Activated CD4-positive, alpha-beta T cell treated with anti-CD3 and anti-CD28 coated beads, Interleukin-2, amount 10 ng/mL, durations not matched to agents 24 days and 14 days (primary cell): ENCODE measurements at regions of chr12 and their contacts with region 1.

Region 1: GRCh38 chr12:104695453-104696148 is 238.9 kb downstream of the CHST11 start:
- DNase-seq: peak; percentile 90
- H3K4me3 Mint-ChIP-seq: peak overlapping the region; percentile 68
- H3K27ac Mint-ChIP-seq: peak overlapping the region; percentile 96
- H3K4me1 Mint-ChIP-seq: peaks cover 66% of the 10 kb centered on the region
- H3K27me3 Mint-ChIP-seq: peaks cover 2% of the 10 kb centered on the region

Region 2: DNA sequence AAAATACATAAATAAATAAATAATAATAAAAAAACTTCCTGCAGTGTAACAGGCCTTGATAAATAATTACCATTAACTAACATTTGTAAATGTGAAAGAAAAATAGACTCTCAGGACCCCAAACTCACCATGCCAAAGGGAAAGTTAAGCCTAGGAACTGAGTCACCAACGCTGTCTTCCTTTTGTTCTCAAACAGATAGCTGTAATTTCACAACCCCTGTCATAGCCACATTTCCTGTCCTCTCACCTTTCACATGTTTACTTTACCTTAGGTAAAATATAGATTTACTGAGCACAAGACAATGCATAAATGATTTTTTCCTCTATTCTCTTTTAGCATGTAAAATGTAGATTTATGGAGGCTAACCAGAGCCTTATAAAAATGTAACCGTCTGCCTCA is 274.7 kb before region 1 on chr12:
- intact Hi-C with region 1: loop called (anchors 1 kb)
- DNase-seq: peak; percentile 65
- H3K4me3 Mint-ChIP-seq: no peak overlapping the region
- H3K27ac Mint-ChIP-seq: peak overlapping the region; percentile 10
- H3K4me1 Mint-ChIP-seq: peaks cover 6% of the 10 kb centered on the region
- H3K27me3 Mint-ChIP-seq: no peaks in the 10 kb centered on the region

Region 3: DNA sequence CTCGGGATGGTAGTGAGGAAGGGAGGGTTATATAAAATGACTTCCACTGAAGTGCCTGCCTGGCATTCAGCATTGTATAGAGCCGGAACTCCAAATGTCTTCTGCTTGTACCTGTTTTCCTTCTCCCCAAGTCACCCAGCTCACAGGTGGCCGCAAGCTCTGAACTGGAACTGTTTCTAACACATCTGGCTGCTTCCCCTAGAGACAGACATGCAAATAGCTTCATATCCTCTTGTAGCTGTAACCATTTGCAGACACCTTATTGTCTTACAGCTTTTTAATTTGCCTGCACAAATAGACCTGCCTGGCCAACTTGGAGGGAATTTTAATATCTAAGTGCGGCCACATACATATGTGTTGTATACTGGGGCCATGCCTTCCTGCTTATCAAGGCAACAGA is 112.9 kb before region 1 on chr12:
- intact Hi-C with region 1: loop called (anchors 5 kb)
- DNase-seq: no peak
- H3K4me3 Mint-ChIP-seq: no peak overlapping the region
- H3K27ac Mint-ChIP-seq: no peak overlapping the region
- H3K4me1 Mint-ChIP-seq: peaks cover 58% of the 10 kb centered on the region
- H3K27me3 Mint-ChIP-seq: no peaks in the 10 kb centered on the region

Region 4: DNA sequence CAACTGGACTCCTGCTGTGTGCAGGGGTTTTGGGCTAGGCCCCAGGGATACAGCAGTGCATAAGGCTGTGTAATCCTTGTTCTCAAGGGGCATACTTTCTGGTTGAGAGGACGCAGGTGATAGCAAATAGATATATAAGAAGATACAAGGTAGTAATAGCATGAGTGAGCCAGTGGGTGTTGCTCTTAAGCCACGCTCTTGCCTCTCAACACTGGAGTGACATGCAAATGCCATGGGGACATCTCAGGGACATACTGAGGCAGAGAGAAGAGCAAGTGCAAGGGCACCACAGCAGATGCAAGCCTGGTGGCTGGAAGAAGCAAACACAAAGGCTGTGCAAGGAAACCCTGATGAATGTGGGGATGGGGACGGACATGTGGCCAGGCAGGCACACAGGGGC is 15.5 kb before region 1 on chr12:
- intact Hi-C with region 1: loop called (anchors 1 kb)
- DNase-seq: peak; percentile 82
- H3K4me3 Mint-ChIP-seq: peak overlapping the region; percentile 10
- H3K27ac Mint-ChIP-seq: peak overlapping the region; percentile 72
- H3K4me1 Mint-ChIP-seq: peaks cover 68% of the 10 kb centered on the region
- H3K27me3 Mint-ChIP-seq: no peaks in the 10 kb centered on the region

Region 5: DNA sequence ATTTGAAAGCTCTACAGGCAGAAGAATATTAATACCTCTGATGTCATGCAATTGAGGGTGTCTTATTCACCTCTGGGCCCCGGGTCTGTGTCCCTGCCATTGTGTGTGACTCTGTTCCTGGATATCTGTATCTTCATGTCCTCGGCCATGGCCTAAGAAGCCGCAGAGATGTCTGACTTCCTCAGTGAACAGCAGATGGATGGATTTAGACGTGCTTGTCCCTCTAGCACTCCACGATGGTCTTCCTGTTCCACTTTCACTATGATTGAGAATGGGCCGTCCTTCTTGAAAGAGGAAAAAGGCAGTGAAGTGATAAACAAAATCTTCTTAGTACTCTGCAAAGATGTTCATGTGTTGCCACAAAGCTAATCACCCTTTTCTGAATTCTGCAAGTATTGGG is 45.1 kb after region 1 on chr12:
- intact Hi-C with region 1: loop called (anchors 1 kb)
- DNase-seq: peak; percentile 84
- H3K4me3 Mint-ChIP-seq: peak overlapping the region; percentile 86
- H3K27ac Mint-ChIP-seq: peak overlapping the region; percentile 92
- H3K4me1 Mint-ChIP-seq: peaks cover 71% of the 10 kb centered on the region
- H3K27me3 Mint-ChIP-seq: no peaks in the 10 kb centered on the region

Region 6: GRCh38 chr12:104930388-104931326 is 235.1 kb after region 1 on chr12:
- intact Hi-C with region 1: loop called (anchors 5 kb)
- DNase-seq: peak; percentile 79
- H3K4me3 Mint-ChIP-seq: peak overlapping the region; percentile 39
- H3K27ac Mint-ChIP-seq: peak overlapping the region; percentile 87
- H3K4me1 Mint-ChIP-seq: peaks cover 41% of the 10 kb centered on the region
- H3K27me3 Mint-ChIP-seq: no peaks in the 10 kb centered on the region

Region 7: GRCh38 chr12:104986022-104986941 is 290.7 kb after region 1 on chr12 and contains the start of gene NOPCHAP1:
- intact Hi-C with region 1: no loop called
- DNase-seq: peak; percentile 97
- H3K4me3 Mint-ChIP-seq: peak within 1 kb of the TSS; percentile 89
- H3K27ac Mint-ChIP-seq: peak within 1 kb of the TSS; percentile 85
- H3K4me1 Mint-ChIP-seq: peaks cover 37% of the 10 kb centered on the region
- H3K27me3 Mint-ChIP-seq: peaks cover 7% of the 10 kb centered on the region
- total RNA-seq, gene NOPCHAP1: 39.8 and 41.3 TPM in 2 replicates

Region 8: DNA sequence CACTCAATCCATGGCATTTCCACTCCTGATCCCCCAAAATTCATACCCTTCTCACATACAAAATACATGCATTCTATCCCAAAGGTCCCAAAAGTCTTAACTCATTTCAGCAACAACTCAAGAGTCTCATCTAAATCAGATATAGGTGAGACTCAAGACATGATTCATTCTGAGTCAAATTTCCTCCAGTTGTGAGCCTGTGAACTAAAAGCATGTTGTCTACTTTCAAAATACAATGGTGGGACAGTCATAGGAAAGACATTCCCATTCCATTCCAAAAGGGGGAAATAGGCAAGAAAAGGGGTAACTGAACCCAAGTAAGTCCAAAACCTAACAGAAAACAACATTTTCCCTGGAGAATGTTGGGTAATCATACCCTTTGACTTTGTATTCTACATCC is 738.2 kb after region 1 on chr12:
- intact Hi-C with region 1: no loop called
- DNase-seq: no peak
- H3K4me3 Mint-ChIP-seq: no peak overlapping the region
- H3K27ac Mint-ChIP-seq: no peak overlapping the region
- H3K4me1 Mint-ChIP-seq: no peaks in the 10 kb centered on the region
- H3K27me3 Mint-ChIP-seq: peaks cover 19% of the 10 kb centered on the region